ENCODE measurements at regions of chr2 and their contacts with region 1.

Region 1: GRCh38 chr2:44184106-44184505 is 15.4 kb downstream of the PPM1B start:
- DNase-seq: peak in 6 of 10 donors; percentile 12 to 69 (median 48)
- ATAC-seq: peak; percentile 87 to 99
- H3K4me3 Mint-ChIP-seq: peak overlapping the region; percentile 28 to 75 (median 53)
- H3K27ac Mint-ChIP-seq: peak overlapping the region; percentile 79 to 98 (median 92)
- H3K4me1 Mint-ChIP-seq: peaks cover 41 to 91% (median 88%) of the 10 kb centered on the region in 4 donors
- H3K27me3 Mint-ChIP-seq: no peaks in the 10 kb centered on the region

Region 2: GRCh38 chr2:43226558-43226954 is 957.5 kb before region 1 on chr2 and contains the start of gene ZFP36L2:
- POLR2A ChIA-PET with region 1: no interaction called
- DNase-seq: peak; percentile 92 to 98 (median 96)
- ATAC-seq: peak; percentile 61 to 71
- H3K4me3 Mint-ChIP-seq: peak within 1 kb of the TSS; percentile 71 to 100 (median 96)
- H3K27ac Mint-ChIP-seq: peak within 1 kb of the TSS; percentile 82 to 99 (median 96)
- H3K4me1 Mint-ChIP-seq: peaks cover 20 to 41% (median 31%) of the 10 kb centered on the region in 4 donors
- H3K27me3 Mint-ChIP-seq: peaks cover 0 to 5% (median 0%) of the 10 kb centered on the region in 5 donors
- polyA plus RNA-seq, gene ZFP36L2: 222 to 420 (median 390) TPM

Region 3: DNA sequence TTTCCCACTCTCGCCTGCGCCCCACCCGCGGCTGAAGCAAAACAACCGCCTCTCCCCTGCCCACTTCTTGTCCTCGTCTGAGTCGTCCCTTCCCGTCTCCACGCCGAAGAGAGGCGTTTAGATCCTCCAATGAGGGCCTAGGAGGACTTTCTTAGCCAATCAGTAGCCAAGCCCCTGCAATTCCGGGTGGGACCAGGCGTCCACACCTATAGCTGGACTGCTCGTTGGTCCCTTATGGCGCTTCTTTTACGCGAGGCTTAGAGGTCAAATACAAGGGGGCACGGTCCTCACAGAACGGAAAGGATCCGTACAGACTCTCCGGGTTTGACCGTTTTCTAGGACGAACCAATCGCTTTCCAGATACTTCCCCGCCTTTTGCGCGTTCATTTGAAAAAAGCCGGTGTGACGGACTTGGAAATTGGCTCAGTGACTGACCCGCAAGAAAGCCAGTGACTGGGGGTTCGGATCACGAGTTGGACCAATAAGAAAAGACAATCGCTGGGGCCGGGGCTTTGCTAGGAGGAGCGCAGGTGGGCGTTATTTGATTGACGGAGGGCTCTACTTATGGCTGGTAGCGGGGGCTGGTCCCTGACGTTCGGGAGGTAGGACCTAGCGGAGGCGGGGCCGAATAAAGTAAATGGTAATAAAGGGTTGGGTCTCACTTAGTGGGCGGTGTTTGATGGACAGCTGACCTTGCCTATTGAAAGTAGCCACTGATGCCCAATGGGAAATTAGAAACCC is 16.0 kb before region 1 on chr2:
- POLR2A ChIA-PET with region 1: interaction called, 13 read pairs
- DNase-seq: peak; percentile 85 to 100 (median 98)
- ATAC-seq: peak; percentile 78 to 81
- H3K4me3 Mint-ChIP-seq: peak overlapping the region; percentile 88 to 100 (median 98)
- H3K27ac Mint-ChIP-seq: peak overlapping the region; percentile 98 to 100 (median 100)
- H3K4me1 Mint-ChIP-seq: peaks cover 13 to 42% (median 36%) of the 10 kb centered on the region in 4 donors
- H3K27me3 Mint-ChIP-seq: no peaks in the 10 kb centered on the region

Region 4: DNA sequence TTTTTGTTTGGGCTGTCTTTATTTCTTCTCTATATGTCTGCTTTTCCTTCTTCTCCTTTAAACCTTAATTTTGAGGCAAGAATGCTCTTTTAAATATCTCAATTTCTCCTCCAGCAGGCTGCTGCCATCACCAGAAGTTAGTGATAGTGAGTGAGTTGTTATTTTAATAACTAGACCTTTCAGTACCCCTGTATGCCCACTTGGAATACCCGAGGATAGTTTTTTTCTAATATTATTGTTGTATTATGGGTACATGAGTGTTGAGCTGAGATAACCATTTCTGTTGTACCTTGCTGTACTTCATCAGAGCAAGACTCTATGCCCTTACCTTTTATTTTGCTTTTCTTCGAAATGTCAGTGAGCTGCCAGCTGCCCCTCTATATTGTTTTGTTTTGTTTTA is 34.7 kb after region 1 on chr2:
- POLR2A ChIA-PET with region 1: no interaction called
- DNase-seq: no peak
- ATAC-seq: peak in 1 of 2 donors; percentile 47
- H3K4me3 Mint-ChIP-seq: no peak overlapping the region
- H3K27ac Mint-ChIP-seq: peak overlapping the region in 7 of 10 donors; percentile 27 to 84 (median 73)
- H3K4me1 Mint-ChIP-seq: peaks cover 6 to 32% (median 23%) of the 10 kb centered on the region in 4 donors
- H3K27me3 Mint-ChIP-seq: no peaks in the 10 kb centered on the region

Region 5: DNA sequence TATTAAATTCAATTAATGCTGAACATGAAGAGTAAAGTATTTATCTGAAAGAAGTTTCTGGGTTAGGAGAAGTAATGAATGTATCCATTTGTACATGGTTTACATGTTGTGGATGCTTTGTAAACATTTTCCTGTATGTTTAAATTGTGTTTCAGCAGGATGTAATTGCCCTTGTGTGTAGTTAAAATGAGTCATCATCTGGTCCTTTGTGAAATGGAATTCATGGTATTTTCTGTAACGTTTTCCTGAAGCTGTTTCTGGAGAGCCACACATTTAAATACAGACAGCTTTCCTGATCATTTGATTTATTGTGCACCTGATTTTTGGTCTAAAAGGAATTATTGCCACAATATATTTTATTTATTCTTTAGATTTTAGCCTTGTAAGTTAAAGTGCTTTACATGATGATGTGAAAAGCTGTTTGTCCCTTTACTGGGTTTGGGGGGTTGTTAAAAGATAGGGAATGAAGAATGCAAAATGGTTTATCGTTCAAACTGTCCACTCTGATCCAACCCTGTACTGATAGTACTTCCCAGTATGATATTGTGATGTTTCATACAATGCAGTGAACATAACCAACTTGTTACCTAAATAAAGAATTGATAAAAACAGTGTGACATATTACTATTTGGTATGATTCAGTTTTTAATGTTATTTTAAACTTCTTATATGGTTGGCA is 49.5 kb after region 1 on chr2:
- POLR2A ChIA-PET with region 1: no interaction called
- DNase-seq: no peak
- ATAC-seq: no peak
- H3K4me3 Mint-ChIP-seq: no peak overlapping the region
- H3K27ac Mint-ChIP-seq: peak overlapping the region in 3 of 10 donors; percentile 29 to 79 (median 57)
- H3K4me1 Mint-ChIP-seq: peaks cover 4 to 37% (median 23%) of the 10 kb centered on the region in 4 donors
- H3K27me3 Mint-ChIP-seq: no peaks in the 10 kb centered on the region

Measured in naive thymus-derived CD8-positive, alpha-beta T cell (primary cell).